ENCODE measurements at regions of chr2 and their contacts with region 1.

Region 1: DNA sequence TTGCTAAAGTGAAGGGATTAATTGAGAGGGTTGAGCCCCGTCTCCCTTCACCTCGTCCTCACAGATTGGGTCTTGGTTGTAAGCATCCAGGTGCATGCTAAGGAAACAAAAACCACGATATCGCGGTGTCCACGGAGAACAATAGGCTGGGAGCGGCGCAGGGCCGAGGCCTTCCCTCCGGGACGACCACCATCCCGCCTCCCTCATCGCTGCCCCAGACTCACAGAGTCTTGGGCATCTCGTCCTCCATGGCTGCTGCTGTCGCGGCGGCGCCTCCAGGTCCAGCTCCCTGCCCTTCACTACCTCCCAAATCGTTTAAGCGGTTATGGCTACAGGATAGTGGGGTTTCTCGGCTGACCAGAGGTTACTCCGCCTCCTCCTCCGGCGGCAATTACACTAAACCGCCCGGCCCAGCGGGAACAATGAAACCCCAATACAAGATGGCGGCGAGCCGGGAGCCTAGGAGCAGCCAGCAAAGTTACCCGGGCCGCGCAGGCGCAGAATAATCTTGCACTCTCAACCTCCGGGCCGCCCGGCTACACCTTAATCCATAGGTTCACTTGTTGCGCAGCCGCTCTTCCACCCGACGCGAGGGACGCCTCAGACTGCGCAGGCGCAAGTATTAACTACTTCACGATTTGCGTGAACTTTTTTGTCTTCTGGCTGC is at the start of gene TIA1:
- DNase-seq: peak; percentile 96
- ATAC-seq: peak; percentile 94
- H3K4me3 ChIP-seq: peak within 1 kb of the TSS; percentile 85 to 94
- H3K27ac ChIP-seq: peak within 1 kb of the TSS; percentile 89
- H3K4me1 ChIP-seq: peaks cover 10 to 18% of the 10 kb centered on the region in 2 experiments; a peak in 3 of 4 replicates
- H3K27me3 ChIP-seq: no peaks in the 10 kb centered on the region
- CTCF ChIP-seq: no peak
- POLR2A ChIP-seq: peak; percentile 48
- RAD21 ChIP-seq: no peak
- total RNA-seq, gene TIA1: 94.1 TPM

Region 2: DNA sequence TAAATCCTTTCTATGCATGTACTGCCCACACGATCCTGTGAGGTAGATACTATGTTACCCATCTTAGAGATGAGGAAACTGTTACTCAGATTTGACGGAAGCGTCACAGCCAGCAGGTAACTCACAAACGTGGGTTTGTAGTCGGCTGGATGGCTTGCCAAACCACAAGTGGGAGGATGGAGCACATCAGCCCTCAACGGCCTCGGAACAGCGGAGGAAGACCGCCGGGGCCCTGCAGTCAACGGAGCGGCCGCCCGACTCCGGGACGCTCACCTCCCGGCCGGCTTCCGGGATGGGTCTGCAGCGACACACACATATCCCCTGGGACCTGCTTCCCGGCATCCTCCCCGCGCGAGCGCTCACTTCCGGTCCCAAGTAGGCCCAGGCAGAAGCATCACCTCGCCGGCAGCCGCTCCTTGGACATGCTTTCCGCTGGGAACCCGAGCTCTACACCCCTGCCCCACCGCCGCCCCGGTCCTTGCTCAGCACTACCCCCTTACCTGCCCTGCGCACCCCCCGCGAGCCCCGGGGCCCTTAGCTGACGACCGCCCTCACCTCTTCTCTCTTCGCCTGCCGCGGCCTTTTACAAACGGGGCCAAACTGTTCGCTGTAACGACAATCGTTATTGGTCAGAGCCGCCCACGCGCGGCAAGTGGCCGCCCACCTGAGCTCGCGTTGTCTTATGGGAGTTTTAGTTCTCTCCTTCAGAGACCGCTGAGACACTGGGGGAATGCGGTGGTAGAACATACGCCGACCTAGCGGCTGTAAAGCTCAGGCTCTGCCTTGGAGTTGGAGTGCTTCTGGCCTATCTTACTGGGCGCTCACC is 57.7 kb before region 1 on chr2 and contains the start of gene C2orf42:
- CTCF ChIA-PET with region 1: no interaction called
- POLR2A ChIA-PET with region 1: interaction called, 4 read pairs
- RAD21 ChIA-PET with region 1: interaction called in 1 of 2 experiments, 7 read pairs
- intact Hi-C with region 1: loop called (anchors 5 kb)
- DNase-seq: peak; percentile 97
- ATAC-seq: peak; percentile 91
- H3K4me3 ChIP-seq: peak within 1 kb of the TSS; percentile 79 to 87
- H3K27ac ChIP-seq: peak within 1 kb of the TSS; percentile 86
- H3K4me1 ChIP-seq: peaks cover 7 to 14% of the 10 kb centered on the region in 2 experiments; a peak in 3 of 4 replicates
- H3K27me3 ChIP-seq: no peaks in the 10 kb centered on the region
- CTCF ChIP-seq: no peak
- POLR2A ChIP-seq: peak; percentile 94
- RAD21 ChIP-seq: peak; percentile 10; the same call in 1 of the 2 replicates
- total RNA-seq, gene C2orf42: 17.4 TPM

Region 3: GRCh38 chr2:70498054-70498453 is 249.7 kb after region 1 on chr2:
- CTCF ChIA-PET with region 1: no interaction called
- POLR2A ChIA-PET with region 1: no interaction called
- RAD21 ChIA-PET with region 1: no interaction called
- intact Hi-C with region 1: no loop called
- DNase-seq: peak; percentile 28
- ATAC-seq: peak; percentile 97
- H3K4me3 ChIP-seq: no peak overlapping the region
- H3K27ac ChIP-seq: no peak overlapping the region
- H3K4me1 ChIP-seq: peaks cover 10 to 20% of the 10 kb centered on the region in 2 experiments; a peak in 3 of 4 replicates
- H3K27me3 ChIP-seq: no peaks in the 10 kb centered on the region
- CTCF ChIP-seq: peak in 2 of 3 experiments; percentile 50 to 58; a peak in 4 of 6 replicates
- POLR2A ChIP-seq: no peak
- RAD21 ChIP-seq: no peak; the same call in 1 of the 2 replicates

Measured in HCT116 (cell line).